ENCODE measurements at regions of chr1 and their contacts with region 1.

Region 1: GRCh38 chr1:51192213-51192843 is 43.7 kb upstream of the RNF11 start:
- DNase-seq: peak; percentile 61 to 83
- H3K4me3 ChIP-seq: no peak overlapping the region
- H3K4me1 ChIP-seq: no peaks in the 10 kb centered on the region; the same call in 1 of the 2 replicates
- H3K27me3 ChIP-seq: peaks cover 5% of the 10 kb centered on the region

Region 2: GRCh38 chr1:50368179-50369012 is 823.9 kb before region 1 on chr1:
- in situ Hi-C with region 1: loop called (anchors 25 kb)
- DNase-seq: peak; percentile 48 to 76
- H3K4me3 ChIP-seq: no peak overlapping the region
- H3K4me1 ChIP-seq: no peaks in the 10 kb centered on the region
- H3K27me3 ChIP-seq: peaks cover 21% of the 10 kb centered on the region

Region 3: DNA sequence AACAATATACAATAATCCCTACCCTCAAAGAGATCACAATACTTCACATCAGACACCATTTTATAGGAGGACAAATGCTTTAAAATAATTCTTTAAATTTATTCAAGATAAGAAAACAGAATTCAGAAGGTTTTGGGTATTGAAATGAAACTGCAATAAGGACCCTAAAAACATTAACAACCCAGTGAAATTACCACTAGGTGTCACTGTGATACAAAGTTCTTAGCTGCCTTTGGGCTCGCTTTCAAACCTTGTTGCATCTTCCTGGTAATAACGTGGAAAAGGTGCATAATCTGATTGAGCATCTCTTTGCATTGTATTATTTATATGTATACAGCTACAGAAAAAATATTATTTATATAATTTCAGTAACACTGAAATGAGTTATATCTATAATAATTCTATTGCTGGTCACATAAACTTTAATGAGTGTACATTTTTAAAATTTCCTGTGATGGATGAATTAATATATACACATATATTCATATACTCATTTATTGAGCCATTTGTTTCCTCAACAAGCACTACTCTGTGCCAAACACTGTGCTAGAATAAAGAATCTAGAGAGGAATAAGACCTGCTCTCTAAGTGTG is 417.5 kb before region 1 on chr1:
- in situ Hi-C with region 1: loop called (anchors 10 kb)
- DNase-seq: peak; percentile 22 to 56
- H3K4me3 ChIP-seq: no peak overlapping the region
- H3K4me1 ChIP-seq: peaks cover 5% of the 10 kb centered on the region
- H3K27me3 ChIP-seq: no peaks in the 10 kb centered on the region

Region 4: GRCh38 chr1:50959913-50960844 is 232.1 kb before region 1 on chr1 and contains the start of gene FAF1:
- in situ Hi-C with region 1: loop called (anchors 10 kb)
- DNase-seq: peak; percentile 96 to 97
- H3K4me3 ChIP-seq: peak within 1 kb of the TSS; percentile 60
- H3K4me1 ChIP-seq: peaks cover 10% of the 10 kb centered on the region
- H3K27me3 ChIP-seq: no peaks in the 10 kb centered on the region

Region 5: DNA sequence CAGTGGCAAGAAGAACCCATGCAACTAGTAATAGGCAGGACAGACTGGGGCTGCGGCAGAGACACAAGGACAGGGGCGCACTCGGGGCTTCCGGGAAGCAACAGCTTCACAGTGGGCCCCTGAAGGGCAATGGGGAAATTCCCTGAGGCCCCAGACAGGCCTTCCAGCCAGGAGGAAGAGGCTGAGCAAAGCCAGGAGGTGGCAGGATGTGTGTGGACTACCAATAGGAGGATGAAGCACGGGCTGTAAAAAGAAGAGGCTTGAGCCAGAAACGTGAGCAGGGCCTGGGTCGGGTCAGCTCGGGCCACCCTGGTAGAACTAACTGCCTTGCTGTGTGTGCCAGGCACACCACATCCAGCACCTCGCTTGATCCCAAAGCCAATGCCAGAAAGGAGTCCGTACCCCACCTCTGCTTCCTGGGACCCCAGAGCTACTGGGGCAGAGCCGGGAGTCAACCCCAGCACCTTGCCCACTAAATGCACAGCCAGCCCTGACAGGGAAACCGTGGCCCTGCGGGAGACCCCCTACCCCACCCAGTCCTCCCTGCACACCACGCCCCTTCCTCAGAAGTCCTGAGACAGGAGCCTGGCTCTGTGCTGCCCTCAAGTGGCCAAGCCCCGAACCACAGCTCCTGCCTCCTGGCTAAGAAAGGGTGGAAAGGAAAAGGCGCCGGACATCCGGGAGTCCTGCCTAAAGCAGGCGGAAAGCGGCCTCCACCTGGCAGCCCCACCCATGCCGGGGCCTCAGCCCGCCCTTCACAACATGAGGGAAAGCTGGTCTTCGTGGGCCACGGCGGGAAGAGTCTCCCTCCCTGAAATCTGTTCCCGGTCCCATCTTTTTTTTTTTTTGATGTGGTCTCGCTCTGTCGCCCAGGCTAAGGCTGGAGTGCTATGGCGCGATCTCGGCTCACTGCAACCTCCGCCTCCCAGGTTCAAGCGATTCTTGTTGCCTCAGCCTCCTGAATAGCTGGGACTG is 104.3 kb after region 1 on chr1:
- in situ Hi-C with region 1: loop called (anchors 10 kb)
- DNase-seq: peak; percentile 79 to 94
- H3K4me3 ChIP-seq: no peak overlapping the region
- H3K4me1 ChIP-seq: peaks cover 3% of the 10 kb centered on the region
- H3K27me3 ChIP-seq: no peaks in the 10 kb centered on the region

Region 6: GRCh38 chr1:51306950-51307349 is 114.6 kb after region 1 on chr1:
- in situ Hi-C with region 1: no loop called
- DNase-seq: no peak
- H3K4me3 ChIP-seq: no peak overlapping the region
- H3K4me1 ChIP-seq: no peaks in the 10 kb centered on the region
- H3K27me3 ChIP-seq: no peaks in the 10 kb centered on the region

Region 7: DNA sequence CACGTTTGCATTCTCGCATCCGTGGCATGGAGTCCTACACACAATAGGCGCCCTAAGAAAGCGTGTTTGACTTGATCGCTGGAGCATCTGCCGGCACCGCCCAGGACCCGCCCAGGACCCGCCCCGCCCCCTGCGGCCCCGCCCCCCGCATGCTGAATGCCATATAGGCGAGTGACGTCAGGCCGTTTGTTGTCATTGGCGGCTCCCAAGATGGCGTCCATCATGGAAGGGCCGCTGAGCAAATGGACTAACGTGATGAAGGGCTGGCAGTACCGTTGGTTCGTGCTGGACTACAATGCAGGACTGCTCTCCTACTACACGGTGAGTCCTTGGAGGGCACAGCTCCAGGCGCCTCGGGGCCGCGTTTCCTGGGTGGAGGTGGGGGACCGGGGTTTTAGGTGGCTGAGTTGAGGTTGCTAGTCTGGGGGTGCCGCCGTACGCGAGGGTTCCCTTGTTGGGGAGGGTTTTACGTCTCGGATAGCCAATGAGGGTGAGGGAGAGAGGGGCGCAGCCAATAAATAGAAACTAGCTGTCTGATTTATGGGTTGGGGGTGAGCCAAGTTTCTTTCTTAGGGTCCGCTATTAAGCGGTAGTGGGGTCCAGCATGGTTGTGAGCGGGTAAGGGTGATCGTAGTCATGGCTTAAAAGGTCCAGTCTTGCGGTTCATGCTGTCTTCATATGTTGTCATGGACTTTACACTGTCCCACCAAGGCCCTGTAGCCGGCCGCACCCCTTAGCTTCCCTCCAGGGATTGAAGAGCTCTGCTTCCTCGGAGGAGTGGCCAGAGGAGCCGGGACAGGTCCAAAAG is 424.8 kb after region 1 on chr1 and contains the start of gene OSBPL9:
- in situ Hi-C with region 1: no loop called
- DNase-seq: peak; percentile 80 to 91
- H3K4me3 ChIP-seq: peak within 1 kb of the TSS; percentile 93
- H3K4me1 ChIP-seq: peaks cover 9% of the 10 kb centered on the region
- H3K27me3 ChIP-seq: no peaks in the 10 kb centered on the region